ENCODE measurements at regions of chr6 and their contacts with region 1.

Region 1: DNA sequence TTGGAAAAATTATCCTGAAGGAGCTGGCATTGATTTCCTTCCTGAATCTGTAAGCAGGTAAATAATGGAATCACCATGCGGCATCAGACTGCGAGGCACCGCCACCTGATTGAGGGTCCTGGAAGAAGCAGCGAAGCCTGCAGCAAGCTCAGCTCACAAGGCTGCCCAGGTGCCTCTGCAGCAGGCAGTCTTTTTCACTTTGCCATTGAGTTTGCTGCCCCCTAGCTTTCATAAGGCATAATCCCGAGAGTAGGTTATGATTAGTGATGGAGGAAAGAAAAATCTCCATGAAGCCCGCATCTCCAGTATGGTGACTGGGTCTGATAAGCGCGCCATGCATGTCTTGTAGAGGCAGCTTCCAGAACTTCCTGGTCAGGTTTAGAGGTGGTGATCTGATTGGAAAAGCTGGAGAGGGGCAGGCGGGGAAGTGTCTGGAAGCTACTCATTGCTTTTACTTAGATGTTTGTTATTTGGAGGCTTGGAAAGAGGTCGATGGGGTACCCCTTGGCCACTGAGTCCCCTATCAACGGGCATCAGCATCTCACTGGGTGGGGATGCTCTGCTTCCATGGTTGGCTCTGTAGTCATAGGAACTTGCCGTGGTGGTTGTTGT is 26.7 kb downstream of the IYD start:
- DNase-seq: peak; percentile 6
- H3K4me3 ChIP-seq: no peak overlapping the region
- H3K27ac ChIP-seq: no peak overlapping the region
- H3K27me3 ChIP-seq: no peaks in the 10 kb centered on the region
- CTCF ChIP-seq: peak; percentile 72

Region 2: DNA sequence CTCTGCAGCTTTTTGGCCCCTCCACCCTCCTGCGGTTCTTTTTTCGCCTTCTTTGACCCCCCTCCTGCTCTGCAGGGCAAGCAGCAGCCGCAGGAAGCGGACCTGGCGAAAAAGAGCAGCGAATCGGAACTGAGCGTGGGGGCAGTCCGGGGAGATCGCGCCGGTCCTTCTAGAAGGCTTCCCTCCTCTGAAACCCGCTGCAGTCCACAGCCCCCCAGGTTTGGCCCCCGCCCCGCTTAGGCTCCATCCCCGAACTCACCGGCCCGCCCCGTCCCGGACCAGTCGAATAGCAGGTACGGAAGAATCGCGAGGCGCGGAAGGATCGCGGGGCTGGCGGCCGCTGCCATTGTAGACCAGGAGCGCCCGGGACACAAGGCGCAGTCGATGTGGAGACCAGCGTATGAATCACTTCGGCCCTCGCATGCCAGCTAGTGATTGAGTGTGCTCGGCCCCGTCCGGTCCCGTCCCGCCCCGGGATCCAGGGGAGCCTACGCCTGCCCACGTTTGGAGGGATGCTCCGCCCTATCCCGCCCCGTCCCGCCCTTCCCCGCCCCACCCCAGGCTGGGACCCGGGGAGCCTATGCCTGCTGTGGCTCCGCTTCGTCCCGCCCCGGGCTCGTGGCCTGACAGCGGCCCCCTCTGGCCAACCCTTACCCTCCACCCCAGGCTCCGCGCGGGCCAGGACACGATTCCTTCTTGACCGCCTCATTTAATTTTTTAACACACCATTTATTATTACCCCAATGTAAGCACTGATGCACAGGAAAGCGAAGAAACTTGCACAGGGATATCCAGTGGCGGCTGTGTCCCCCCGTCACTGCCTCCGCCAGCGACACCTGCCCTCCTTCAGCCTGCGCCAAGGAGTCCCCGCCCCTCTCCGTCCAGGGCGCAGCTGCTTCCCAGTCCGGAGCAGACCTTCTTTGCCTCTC is 326.5 kb before region 1 on chr6 and contains the start of gene ULBP3:
- CTCF ChIA-PET with region 1: interaction called, 25 read pairs
- POLR2A ChIA-PET with region 1: no interaction called
- DNase-seq: peak; percentile 81
- H3K4me3 ChIP-seq: peak within 1 kb of the TSS; percentile 76
- H3K27ac ChIP-seq: peak within 1 kb of the TSS; percentile 61
- H3K27me3 ChIP-seq: no peaks in the 10 kb centered on the region
- CTCF ChIP-seq: peak; percentile 63
- polyA plus RNA-seq, gene ULBP3: 13.1 and 16.0 TPM in 2 replicates

Region 3: GRCh38 chr6:150079604-150080003 is 315.9 kb before region 1 on chr6:
- CTCF ChIA-PET with region 1: interaction called, 98 read pairs
- POLR2A ChIA-PET with region 1: no interaction called
- DNase-seq: no peak
- H3K4me3 ChIP-seq: no peak overlapping the region
- H3K27ac ChIP-seq: no peak overlapping the region
- H3K27me3 ChIP-seq: peaks cover 14% of the 10 kb centered on the region
- CTCF ChIP-seq: no peak

Region 4: DNA sequence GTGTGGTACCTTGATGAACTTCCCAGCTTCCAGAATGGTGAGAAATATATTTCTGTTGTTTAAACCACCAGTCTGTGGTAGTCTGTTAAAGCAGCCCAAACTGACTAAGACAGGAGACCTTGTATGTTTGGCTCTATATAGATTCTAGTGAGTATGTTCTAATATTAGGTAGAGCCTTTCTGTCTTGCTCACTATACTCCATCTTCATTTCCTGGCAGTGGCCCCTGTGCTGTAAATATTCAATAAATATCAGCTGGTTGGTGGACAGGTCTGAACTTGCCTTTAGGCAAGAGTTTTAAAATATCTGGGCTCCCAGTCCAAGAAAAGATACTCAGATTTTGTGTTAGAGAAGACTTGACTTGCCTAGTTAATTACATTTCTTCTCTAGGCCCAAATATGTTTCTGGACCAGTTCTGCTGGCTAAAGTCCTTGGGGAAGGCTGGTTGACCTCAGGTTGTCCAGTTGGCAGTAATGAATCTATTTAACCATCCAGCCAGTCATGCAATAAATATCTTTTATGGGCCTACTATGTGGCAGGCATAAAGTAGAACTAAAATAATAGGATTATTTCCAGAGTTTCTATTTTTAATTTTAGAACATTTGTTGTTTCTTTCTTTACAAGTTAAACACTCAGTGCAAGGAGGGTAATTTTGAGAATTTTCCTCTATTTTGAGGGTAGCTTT is 230.3 kb before region 1 on chr6:
- CTCF ChIA-PET with region 1: no interaction called
- POLR2A ChIA-PET with region 1: no interaction called
- DNase-seq: no peak
- H3K4me3 ChIP-seq: no peak overlapping the region
- H3K27ac ChIP-seq: no peak overlapping the region
- H3K27me3 ChIP-seq: peaks cover 2% of the 10 kb centered on the region
- CTCF ChIP-seq: no peak

Region 5: GRCh38 chr6:150380256-150380655 is 15.2 kb before region 1 on chr6:
- CTCF ChIA-PET with region 1: interaction called, 28 read pairs
- POLR2A ChIA-PET with region 1: no interaction called
- DNase-seq: no peak
- H3K4me3 ChIP-seq: no peak overlapping the region
- H3K27ac ChIP-seq: no peak overlapping the region
- H3K27me3 ChIP-seq: peaks cover 3% of the 10 kb centered on the region
- CTCF ChIP-seq: no peak

Region 6: DNA sequence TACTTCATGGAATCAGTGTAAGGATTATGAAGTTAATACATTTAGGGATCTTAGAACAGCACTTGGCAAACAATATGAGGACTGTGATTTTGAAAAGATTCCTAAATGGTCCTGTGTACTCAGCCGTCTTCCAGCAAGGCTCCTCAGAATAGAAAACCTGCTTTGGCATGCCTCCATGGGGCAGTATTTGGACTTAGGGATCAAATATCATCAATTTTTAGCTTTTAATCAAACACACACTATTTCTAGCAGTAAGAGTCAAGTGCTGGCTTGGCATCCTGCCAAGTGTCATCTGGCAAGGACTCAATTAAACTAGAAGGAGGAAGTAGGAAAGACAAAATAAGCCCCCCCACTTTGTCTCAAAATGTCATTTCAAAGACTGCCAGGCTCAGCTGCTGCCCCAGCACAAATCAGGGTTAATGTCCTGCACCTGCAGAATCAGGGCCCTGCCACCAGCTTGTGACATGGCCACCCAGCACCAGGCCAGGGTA is 14.1 kb after region 1 on chr6:
- CTCF ChIA-PET with region 1: interaction called, 32 read pairs
- POLR2A ChIA-PET with region 1: no interaction called
- DNase-seq: no peak
- H3K4me3 ChIP-seq: no peak overlapping the region
- H3K27ac ChIP-seq: no peak overlapping the region
- H3K27me3 ChIP-seq: no peaks in the 10 kb centered on the region
- CTCF ChIP-seq: no peak

Region 7: DNA sequence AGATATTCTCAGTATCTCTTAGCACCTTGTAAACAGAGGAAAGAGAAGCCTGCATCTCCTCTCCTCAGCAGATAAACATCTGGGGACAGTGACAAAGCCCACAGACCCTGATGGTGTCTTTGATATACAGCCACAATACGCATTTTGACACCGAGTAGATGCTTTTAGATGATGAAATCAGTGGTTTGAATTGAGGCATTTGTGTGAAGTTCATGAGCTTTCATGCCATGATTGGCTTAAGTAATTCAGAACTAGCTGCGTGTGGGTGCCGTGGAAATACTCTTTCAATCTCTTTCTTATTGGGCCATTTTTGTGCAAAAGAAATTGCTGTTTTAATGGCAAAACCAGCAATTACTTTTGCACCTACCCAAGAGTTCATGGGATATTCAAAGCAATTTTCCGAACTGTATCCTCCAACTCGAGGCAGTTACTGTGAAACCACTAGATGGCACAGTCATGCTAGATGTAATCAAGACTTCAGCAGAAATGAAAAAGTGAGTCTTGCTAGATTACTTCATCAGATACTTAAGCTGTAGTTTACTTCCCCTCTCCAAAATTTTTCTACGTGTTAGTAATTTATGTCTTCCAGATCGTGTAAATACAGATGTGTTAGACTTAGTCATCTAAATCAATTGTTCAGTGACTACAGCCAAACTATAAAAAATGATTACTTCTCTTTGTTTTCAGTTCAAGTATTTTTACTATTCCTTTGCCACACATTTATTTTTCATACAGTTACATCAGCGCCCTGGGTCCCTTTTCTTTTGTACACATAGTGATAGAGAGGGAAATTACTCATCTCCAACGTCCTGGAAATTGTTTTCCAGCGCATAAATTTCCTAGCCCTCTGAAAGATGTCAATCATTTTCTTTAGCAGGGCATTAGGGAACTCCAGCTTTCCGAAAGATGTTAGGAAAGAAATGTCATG is 22.7 kb after region 1 on chr6:
- CTCF ChIA-PET with region 1: interaction called, 16 read pairs
- POLR2A ChIA-PET with region 1: no interaction called
- DNase-seq: peak; percentile 10
- H3K4me3 ChIP-seq: peak overlapping the region; percentile 38; the same call in 1 of the 2 replicates
- H3K27ac ChIP-seq: no peak overlapping the region
- H3K27me3 ChIP-seq: no peaks in the 10 kb centered on the region
- CTCF ChIP-seq: peak; percentile 69